ENCODE measurements at regions of chr11 and their contacts with region 1.

Region 1: GRCh38 chr11:110195845-110196754 is 100.3 kb downstream of the RDX start:
- DNase-seq: peak; percentile 57 to 99
- H3K4me3 ChIP-seq: no peak overlapping the region; the same call in 1 of the 2 replicates
- H3K27ac ChIP-seq: peak overlapping the region; percentile 91
- H3K4me1 ChIP-seq: peaks cover 82% of the 10 kb centered on the region
- H3K27me3 ChIP-seq: no peaks in the 10 kb centered on the region
- CTCF ChIP-seq: no peak

Region 2: DNA sequence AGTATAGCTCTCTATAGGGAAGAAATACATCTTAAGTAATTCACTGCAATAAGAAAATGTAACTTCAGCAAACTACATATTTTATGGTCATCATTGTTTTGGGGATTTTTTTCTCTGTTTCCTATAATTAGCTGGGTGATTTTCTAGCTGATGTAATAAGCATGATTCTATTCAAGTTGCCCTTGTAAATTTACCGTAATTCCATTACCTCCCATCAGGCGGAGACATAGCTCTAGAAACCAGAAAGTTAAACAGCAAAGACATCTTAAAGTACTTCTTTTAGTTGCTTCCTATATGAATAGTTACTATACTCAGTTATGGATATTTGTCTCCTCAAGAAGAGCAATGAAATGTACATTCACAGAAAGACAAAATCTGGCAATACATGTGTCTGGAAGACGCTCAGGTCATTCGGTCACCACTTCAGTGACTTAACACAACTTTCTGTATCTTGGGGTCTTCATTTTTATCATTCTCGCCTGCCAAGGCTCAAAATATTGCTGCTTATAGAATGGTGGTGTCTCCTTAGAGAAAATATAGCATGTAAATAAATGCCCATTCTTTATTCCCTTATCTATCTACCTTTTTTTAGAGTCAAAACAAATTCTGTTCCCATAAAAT is 342.8 kb before region 1 on chr11:
- CTCF ChIA-PET with region 1: no interaction called
- POLR2A ChIA-PET with region 1: no interaction called
- intact Hi-C with region 1: loop called (anchors 2 kb)
- DNase-seq: peak; percentile 21 to 66
- H3K4me3 ChIP-seq: no peak overlapping the region
- H3K27ac ChIP-seq: no peak overlapping the region
- H3K4me1 ChIP-seq: no peaks in the 10 kb centered on the region
- H3K27me3 ChIP-seq: no peaks in the 10 kb centered on the region
- CTCF ChIP-seq: peak; percentile 88

Region 3: GRCh38 chr11:110092515-110093404 is 103.3 kb before region 1 on chr11 and contains the start of gene ZC3H12C:
- CTCF ChIA-PET with region 1: no interaction called
- POLR2A ChIA-PET with region 1: no interaction called
- intact Hi-C with region 1: loop called (anchors 1 kb)
- DNase-seq: peak; percentile 89
- H3K4me3 ChIP-seq: peak within 1 kb of the TSS; percentile 82
- H3K27ac ChIP-seq: peak within 1 kb of the TSS; percentile 77
- H3K4me1 ChIP-seq: peaks cover 53% of the 10 kb centered on the region
- H3K27me3 ChIP-seq: no peaks in the 10 kb centered on the region
- CTCF ChIP-seq: peak; percentile 24; the same call in 1 of the 2 replicates
- total RNA-seq, gene ZC3H12C: 9.3 and 12.4 TPM in 2 replicates

Region 4: DNA sequence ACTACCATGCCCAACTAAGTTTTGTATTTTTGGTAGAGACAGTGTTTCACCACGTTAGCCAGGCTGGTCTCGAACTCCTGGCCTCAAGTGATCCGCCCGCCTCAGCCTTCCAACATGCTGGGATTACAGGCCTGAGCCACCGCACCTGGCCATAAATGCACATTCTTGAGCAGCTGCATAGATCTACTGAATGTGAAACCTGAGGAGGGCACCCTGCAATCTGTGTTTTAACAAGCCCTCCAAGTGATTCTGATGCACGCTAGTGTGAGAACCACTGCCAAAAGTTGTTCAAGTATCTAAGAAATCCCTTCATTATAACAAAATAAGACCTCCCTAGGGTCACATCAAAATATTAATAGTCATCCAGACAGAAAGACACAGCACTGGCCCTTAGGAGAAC is 11.0 kb after region 1 on chr11:
- CTCF ChIA-PET with region 1: no interaction called
- POLR2A ChIA-PET with region 1: no interaction called
- intact Hi-C with region 1: no loop called
- DNase-seq: no peak
- H3K4me3 ChIP-seq: no peak overlapping the region
- H3K27ac ChIP-seq: no peak overlapping the region
- H3K4me1 ChIP-seq: no peaks in the 10 kb centered on the region
- H3K27me3 ChIP-seq: no peaks in the 10 kb centered on the region
- CTCF ChIP-seq: no peak

Region 5: GRCh38 chr11:110296226-110297075 is 100.4 kb after region 1 on chr11 and contains the start of gene RDX:
- CTCF ChIA-PET with region 1: interaction called, 4 read pairs
- POLR2A ChIA-PET with region 1: no interaction called
- intact Hi-C with region 1: loop called (anchors 1 kb)
- DNase-seq: peak; percentile 91 to 93
- H3K4me3 ChIP-seq: peak within 1 kb of the TSS; percentile 86
- H3K27ac ChIP-seq: peak within 1 kb of the TSS; percentile 83
- H3K4me1 ChIP-seq: peaks cover 63% of the 10 kb centered on the region
- H3K27me3 ChIP-seq: no peaks in the 10 kb centered on the region
- CTCF ChIP-seq: no peak; the same call in 1 of the 2 replicates
- total RNA-seq, gene RDX: 143 and 196 TPM in 2 replicates

Region 6: GRCh38 chr11:110362971-110363509 is 166.9 kb after region 1 on chr11:
- CTCF ChIA-PET with region 1: interaction called, 7 read pairs
- POLR2A ChIA-PET with region 1: no interaction called
- intact Hi-C with region 1: loop called (anchors 2 kb)
- DNase-seq: peak; percentile 47 to 73
- H3K4me3 ChIP-seq: peak overlapping the region; percentile 30; the same call in 1 of the 2 replicates
- H3K27ac ChIP-seq: peak overlapping the region; percentile 72
- H3K4me1 ChIP-seq: peaks cover 46% of the 10 kb centered on the region
- H3K27me3 ChIP-seq: no peaks in the 10 kb centered on the region
- CTCF ChIP-seq: no peak

Measured in PC-9 (cell line).